ENCODE measurements at regions of chr15 and their contacts with region 1.

Region 1: GRCh38 chr15:66763186-66764066 is 61.4 kb downstream of the SMAD6 start:
- DNase-seq: peak; percentile 92 to 98
- H3K4me3 ChIP-seq: no peak overlapping the region
- H3K27ac ChIP-seq: peak overlapping the region; percentile 88 to 92
- H3K4me1 ChIP-seq: peaks cover 12 to 93% (median 81%) of the 10 kb centered on the region in 4 donors
- H3K27me3 ChIP-seq: no peaks in the 10 kb centered on the region
- CTCF ChIP-seq: no peak

Region 2: DNA sequence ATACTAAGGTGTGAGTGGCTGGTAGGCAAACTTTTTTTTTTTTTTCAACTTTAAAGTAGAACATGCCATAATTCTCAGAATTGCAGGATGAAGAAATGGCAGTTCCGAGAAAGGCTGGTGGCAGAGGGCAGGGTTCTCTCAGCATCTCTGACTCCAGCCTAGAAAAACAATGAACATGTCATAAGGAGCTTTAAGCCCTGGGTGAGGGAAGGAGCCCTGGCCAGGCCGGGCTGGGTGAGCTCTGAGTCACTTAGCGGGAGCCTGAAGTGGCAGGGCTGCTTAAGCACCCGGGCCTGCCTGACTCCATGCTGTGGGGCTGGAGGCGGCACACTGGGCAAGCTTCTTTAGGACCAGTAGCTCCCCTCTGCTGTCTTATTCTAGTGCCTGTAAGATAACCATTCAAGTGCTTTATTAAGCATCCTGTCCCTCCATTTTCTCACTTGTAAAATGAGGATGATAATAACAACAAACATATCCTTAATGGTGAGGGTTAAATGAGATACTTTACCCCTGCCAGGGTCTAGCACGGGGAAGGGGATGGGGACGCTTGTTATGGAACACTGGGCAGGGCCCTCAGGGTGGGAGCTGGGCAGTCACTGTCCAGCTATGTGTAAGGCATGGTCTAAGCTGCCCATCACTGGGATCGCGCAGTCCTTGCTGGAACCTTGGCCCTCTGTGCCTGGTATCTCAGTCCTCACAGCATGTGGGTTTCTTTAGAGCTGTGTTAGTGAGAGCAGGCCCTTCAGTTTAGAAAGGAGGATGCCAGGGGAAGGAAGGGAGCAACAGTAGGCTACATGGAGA is 43.0 kb before region 1 on chr15:
- intact Hi-C with region 1: loop called (anchors 5 kb)
- DNase-seq: peak; percentile 75 to 95
- H3K4me3 ChIP-seq: no peak overlapping the region
- H3K27ac ChIP-seq: peak overlapping the region; percentile 85 to 90
- H3K4me1 ChIP-seq: peaks cover 5 to 95% (median 59%) of the 10 kb centered on the region in 4 donors
- H3K27me3 ChIP-seq: no peaks in the 10 kb centered on the region
- CTCF ChIP-seq: no peak